ENCODE measurements at regions of chr11 and their contacts with region 1.

Region 1: DNA sequence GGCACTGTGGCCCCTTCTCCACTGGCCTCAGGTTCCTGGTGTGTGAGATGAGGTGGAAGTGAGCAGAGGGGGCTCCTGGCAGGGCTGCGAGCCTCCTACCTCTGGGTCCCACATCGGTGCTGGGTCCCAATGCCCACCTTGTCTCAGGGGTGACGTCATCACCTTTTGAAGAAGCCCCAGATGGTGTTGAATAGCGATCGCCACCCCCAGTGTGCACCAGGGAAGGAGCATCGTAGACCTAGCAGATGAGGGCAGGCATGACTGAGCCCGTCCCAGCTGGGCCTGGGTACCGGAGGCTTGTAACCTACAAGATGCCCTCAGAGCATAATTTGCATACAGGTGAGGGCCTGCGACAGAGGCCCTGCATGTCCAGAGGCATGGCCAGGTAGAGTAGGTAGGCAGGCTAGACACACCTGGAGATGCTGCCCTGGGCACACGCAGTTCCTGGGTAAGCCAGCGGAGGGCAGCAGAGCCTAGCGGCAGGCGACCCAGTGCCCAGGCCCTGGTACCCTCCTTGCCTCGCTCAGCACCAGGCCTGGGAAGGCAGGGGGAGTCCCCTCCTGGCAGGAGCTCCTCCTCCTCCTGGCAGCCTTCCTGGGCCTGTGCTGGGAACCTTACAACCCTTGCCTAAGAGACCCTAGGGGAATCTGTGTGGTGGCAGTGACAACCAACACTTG is 52.5 kb downstream of the TPCN2 start:
- DNase-seq: peak; percentile 83
- H3K4me3 ChIP-seq: no peak overlapping the region
- H3K27ac ChIP-seq: no peak overlapping the region
- H3K4me1 ChIP-seq: peaks cover 0 to 4% (median 0%) of the 10 kb centered on the region in 4 donors
- H3K27me3 ChIP-seq: no peaks in the 10 kb centered on the region
- CTCF ChIP-seq: peak; percentile 96 to 99 (median 99)
- EP300 ChIP-seq: no peak
- POLR2A ChIP-seq: no peak

Region 2: GRCh38 chr11:69642913-69643632 is 541.8 kb after region 1 on chr11:
- in situ Hi-C with region 1: loop called in 1 of 4 experiments (anchors 10 kb)
- intact Hi-C with region 1: loop called (anchors 1 kb)
- DNase-seq: peak; percentile 86
- H3K4me3 ChIP-seq: peak overlapping the region; percentile 71 to 93 (median 78)
- H3K27ac ChIP-seq: peak overlapping the region; percentile 82 to 89 (median 86)
- H3K4me1 ChIP-seq: peaks cover 21 to 60% (median 54%) of the 10 kb centered on the region in 4 donors
- H3K27me3 ChIP-seq: peaks cover 41% of the 10 kb centered on the region
- CTCF ChIP-seq: peak; percentile 79 to 96 (median 90)
- EP300 ChIP-seq: no peak
- POLR2A ChIP-seq: peak; percentile 19

Region 3: GRCh38 chr11:69662017-69662698 is 560.9 kb after region 1 on chr11:
- in situ Hi-C with region 1: loop called in 3 of 4 experiments (anchors 10 to 25 kb)
- intact Hi-C with region 1: no loop called
- DNase-seq: no peak
- H3K4me3 ChIP-seq: no peak overlapping the region
- H3K27ac ChIP-seq: no peak overlapping the region
- H3K4me1 ChIP-seq: no peaks in the 10 kb centered on the region
- H3K27me3 ChIP-seq: no peaks in the 10 kb centered on the region
- CTCF ChIP-seq: no peak
- EP300 ChIP-seq: no peak
- POLR2A ChIP-seq: no peak

Region 4: GRCh38 chr11:69670158-69670845 is 569.0 kb after region 1 on chr11:
- in situ Hi-C with region 1: loop called in 3 of 4 experiments (anchors 10 to 25 kb)
- intact Hi-C with region 1: no loop called
- DNase-seq: peak; percentile 79
- H3K4me3 ChIP-seq: no peak overlapping the region
- H3K27ac ChIP-seq: peak overlapping the region in 1 of 4 donors; percentile 39
- H3K4me1 ChIP-seq: peaks cover 9 to 24% (median 13%) of the 10 kb centered on the region in 4 donors
- H3K27me3 ChIP-seq: no peaks in the 10 kb centered on the region
- CTCF ChIP-seq: peak; percentile 87 to 96 (median 92)
- EP300 ChIP-seq: no peak
- POLR2A ChIP-seq: no peak

Measured in transverse colon (tissue), 4 donors.